Dendritic cell treated with granulocyte-macrophage colony-stimulating factor and Interleukin-4, amounts not matched to agents 40 ng/mL and 50 ng/mL, for 4 days (primary cell): ENCODE measurements at regions of chr5 and their contacts with region 1.

Region 1: GRCh38 chr5:849651-850301 is 1.0 kb downstream of the ZDHHC11 start:
- H3K4me3 Mint-ChIP-seq: no peak overlapping the region
- H3K27ac Mint-ChIP-seq: no peak overlapping the region
- H3K4me1 Mint-ChIP-seq: no peaks in the 10 kb centered on the region
- H3K27me3 Mint-ChIP-seq: peaks cover 3% of the 10 kb centered on the region

Region 2: DNA sequence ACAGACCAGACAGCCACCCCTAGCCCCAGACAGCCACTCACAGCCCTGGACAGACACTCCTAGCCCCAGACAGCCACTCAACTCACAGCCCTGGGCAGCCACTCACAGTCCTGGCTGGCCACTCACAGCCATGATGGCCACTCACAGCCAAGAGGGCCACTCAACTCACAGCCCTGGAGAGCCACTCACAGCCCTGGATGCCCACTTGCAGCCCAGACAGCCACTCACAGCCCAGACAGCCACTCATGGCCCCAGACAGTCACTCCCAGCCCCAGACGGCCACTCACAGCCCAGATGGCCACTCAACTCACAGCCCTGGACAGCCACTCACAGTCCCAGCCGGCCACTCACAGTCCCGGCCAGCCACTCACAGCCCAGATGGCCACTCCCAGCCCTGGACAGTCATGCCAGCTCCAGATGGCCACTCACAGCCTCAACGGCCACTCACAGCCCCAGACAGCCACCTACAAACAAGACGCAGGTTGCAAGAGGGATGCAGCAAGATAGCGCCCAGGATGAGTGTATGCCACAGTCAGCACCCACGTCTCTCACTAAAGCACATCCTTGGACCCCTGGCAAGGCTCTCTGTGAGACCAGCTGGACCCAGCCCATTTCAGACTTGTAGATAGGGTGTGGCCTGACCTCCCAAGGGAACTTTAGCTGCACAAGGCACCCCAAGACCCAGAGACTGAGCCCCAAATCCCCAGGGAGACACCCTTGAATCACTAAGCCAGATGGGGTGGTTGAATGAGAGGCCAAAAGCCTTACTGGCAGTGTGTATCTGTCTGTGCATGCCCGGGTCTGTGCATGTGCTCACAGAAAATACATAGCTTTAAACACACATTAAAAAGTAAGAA is 87.7 kb before region 1 on chr5:
- intact Hi-C with region 1: loop called (anchors 10 kb)
- H3K4me3 Mint-ChIP-seq: no peak overlapping the region
- H3K27ac Mint-ChIP-seq: no peak overlapping the region
- H3K4me1 Mint-ChIP-seq: no peaks in the 10 kb centered on the region
- H3K27me3 Mint-ChIP-seq: peaks cover 7% of the 10 kb centered on the region